ENCODE measurements at regions of chr15 and their contacts with region 1.

Region 1: DNA sequence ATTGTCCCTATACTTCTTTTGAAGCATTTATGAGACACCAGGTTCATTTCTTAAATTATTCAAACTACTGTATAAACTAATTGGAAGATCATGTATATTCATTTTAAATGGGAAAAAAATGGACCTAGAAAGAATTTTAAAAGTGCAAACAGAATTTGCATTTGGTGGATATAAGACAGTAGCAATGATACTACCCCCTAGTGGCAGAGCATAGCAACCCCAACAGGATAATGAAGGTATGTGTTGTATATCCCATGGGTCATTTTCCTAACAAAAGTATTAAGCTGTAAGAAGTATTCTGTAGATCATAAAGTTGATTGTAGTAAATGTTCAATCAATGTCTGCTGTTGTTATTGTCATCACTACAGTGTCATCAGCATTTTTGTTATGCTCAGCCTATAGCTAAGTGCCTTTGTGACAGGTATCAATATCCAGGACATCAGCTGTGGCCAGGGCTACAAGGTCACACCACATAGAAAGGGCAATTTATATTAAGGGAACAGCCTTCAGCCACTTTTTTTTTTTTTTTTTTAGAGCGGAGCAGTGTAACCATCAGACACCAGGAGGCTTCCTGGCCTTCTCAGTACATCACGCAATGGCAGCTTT is 175.8 kb downstream of the FOXB1 start:
- DNase-seq: peak in 1 of 10 donors; percentile 14
- H3K4me3 ChIP-seq: no peak overlapping the region
- H3K27ac ChIP-seq: no peak overlapping the region
- H3K27me3 ChIP-seq: peaks cover 0 to 16% (median 0%) of the 10 kb centered on the region in 45 donors
- CTCF ChIP-seq: peak; percentile 47 to 88 (median 74)

Region 2: DNA sequence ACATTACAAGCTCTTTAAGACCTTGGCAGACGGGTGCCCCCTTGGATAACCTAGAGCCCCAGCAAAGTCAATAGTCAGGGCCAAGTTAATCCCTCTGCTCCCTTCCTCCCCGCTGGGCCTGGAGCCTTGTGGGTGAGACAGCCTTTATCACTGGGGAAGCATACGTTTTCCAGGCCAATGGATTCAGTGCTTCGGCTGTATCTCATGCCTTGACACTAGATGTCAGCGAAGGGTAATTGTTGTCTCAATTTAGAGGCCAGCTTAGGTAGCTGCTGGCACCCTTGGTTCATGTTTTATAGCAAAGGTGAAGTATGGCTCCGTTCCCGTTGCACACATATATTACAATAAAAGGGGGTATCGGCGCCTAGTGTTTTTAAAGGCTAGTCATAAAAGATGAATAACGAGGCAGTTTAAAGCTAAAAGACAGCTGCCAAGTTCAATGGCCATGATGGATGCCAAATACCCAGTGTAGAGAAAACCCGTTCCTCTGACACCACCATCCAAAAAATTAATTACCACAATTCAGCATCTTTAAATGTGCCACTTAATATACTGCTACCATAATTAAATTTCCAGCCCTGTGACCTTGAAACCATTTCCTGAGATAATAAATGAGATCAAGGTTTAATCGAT is 438.5 kb before region 1 on chr15:
- intact Hi-C with region 1: loop called in 1 of 2 experiments (anchors 5 kb)
- DNase-seq: no peak
- H3K4me3 ChIP-seq: no peak overlapping the region
- H3K27ac ChIP-seq: no peak overlapping the region
- H3K27me3 ChIP-seq: peaks cover 0 to 46% (median 17%) of the 10 kb centered on the region in 45 donors
- CTCF ChIP-seq: peak in 15 of 56 donors; percentile 10 to 40 (median 19)

Region 3: DNA sequence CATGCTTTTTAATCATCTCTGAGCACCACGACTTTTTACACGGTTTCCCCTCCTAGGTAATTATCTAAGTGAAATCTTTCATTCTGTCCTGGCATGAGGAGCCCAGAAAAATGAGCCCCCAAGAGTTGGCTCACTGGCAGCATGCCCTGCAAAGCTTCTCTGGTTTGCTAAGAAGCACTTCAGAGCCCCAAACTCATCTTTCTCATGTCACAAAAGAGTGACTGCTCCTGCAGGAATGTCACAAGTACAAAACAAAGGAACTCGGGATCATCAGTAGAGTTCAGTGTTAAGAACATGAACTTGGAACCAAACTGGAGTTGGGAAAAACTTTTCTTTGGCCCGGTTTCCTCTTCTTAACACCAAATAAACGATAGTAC is 51.9 kb before region 1 on chr15:
- intact Hi-C with region 1: loop called in 1 of 2 experiments (anchors 5 kb)
- DNase-seq: no peak
- H3K4me3 ChIP-seq: peak overlapping the region; percentile 31 to 76 (median 61)
- H3K27ac ChIP-seq: peak overlapping the region in 46 of 59 donors; percentile 9 to 90 (median 62)
- H3K27me3 ChIP-seq: peaks cover 0 to 24% (median 0%) of the 10 kb centered on the region in 45 donors
- CTCF ChIP-seq: no peak

Region 4: DNA sequence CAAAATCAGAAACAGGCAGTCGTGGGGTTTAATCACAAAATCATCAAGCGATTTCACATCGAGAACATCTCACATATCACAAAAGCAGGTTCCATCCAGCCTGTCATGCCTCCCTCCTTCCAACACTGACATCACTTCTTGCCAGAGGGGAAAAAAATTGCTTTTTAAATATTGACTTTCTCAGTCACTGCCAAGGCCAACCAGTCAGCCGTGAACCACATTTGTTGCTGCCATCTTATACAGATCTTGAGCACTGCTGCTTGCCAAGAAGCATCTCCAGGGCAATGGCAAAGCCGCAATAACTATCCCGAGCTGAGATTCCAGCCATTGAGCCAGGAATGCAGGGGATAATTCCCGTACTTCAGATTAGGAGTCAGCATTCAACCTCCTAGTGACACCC is 43.3 kb after region 1 on chr15:
- intact Hi-C with region 1: no loop called
- DNase-seq: no peak
- H3K4me3 ChIP-seq: no peak overlapping the region
- H3K27ac ChIP-seq: no peak overlapping the region
- H3K27me3 ChIP-seq: peaks cover 0 to 10% (median 0%) of the 10 kb centered on the region in 45 donors
- CTCF ChIP-seq: no peak

Measured in dorsolateral prefrontal cortex (tissue), 120 donors.